CD14-positive monocyte (primary cell): ENCODE measurements at regions of chr11 and their contacts with region 1.

Region 1: DNA sequence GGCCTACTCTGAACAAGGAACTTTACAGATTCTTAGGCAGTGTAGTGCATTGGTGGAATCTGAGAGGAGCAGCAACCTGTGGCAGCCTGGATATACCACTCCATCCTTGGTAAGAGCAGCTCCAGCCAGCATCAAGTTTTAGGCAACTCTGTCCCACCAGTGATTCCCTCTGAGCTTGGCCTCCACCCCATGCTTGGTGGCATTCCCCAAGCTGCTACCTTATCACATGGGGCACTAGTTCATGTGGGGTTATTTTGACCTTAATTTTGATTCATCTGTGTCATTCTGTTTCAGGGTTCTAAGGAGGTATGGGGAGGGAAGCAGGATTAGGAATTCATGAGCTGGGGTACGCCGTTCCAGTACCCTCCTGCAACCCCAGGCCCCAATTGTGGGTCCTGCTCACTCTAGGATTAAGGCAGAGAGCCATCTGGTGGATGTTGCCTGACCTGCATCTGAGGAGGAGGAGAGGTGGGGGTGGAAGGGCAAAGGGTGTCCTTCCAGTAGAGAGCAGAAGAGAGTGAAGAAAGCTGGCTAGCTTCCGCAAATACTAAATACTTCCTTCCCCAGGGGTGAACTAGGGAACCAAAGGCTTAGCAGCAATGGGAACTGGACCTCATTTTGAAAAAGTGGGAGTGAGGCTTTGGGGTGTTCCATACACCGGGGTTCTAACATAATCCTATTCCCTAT is 10.5 kb downstream of the LRRC51 start:
- DNase-seq: peak; percentile 86 to 92 (median 91)
- H3K4me3 ChIP-seq: peak overlapping the region in 1 of 3 experiments; percentile 10
- H3K4me3 Mint-ChIP-seq: peak overlapping the region in 1 of 2 donors; percentile 37
- H3K27ac ChIP-seq: peak overlapping the region; percentile 42 to 70
- H3K27ac Mint-ChIP-seq: peak overlapping the region; percentile 68 to 96 (median 87)
- H3K4me1 ChIP-seq: peaks cover 23% of the 10 kb centered on the region in 2 donors
- H3K4me1 Mint-ChIP-seq: peaks cover 31% of the 10 kb centered on the region
- H3K27me3 ChIP-seq: no peaks in the 10 kb centered on the region
- H3K27me3 Mint-ChIP-seq: peaks cover 0 to 2% (median 0%) of the 10 kb centered on the region in 3 donors
- CTCF ChIP-seq: peak; percentile 96

Region 2: DNA sequence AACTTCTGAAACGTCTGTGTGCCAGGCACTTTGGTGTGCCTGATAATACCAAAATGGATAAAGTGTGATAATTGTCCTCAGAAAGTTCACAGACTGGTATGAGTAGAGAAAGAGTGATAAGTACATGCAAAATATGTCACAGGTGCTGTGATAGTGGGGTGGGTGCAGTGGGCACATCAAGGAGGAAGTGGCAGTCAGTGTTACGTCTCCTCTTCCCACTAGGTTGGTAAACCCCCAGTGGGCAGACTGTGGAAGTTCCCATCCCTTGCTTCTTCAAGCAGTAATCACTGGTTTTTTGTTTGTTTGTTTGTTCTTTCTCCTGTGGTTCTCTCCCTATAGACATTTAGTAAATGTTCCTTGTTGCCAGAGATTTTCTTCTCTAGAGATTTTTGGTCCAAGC is 156.9 kb before region 1 on chr11:
- intact Hi-C with region 1: no loop called
- DNase-seq: peak in 1 of 3 donors; percentile 60
- H3K4me3 ChIP-seq: no peak overlapping the region
- H3K4me3 Mint-ChIP-seq: no peak overlapping the region
- H3K27ac ChIP-seq: no peak overlapping the region
- H3K27ac Mint-ChIP-seq: peak overlapping the region in 2 of 7 donors; percentile 18 to 21
- H3K4me1 ChIP-seq: peaks cover 10 to 13% of the 10 kb centered on the region in 2 donors
- H3K4me1 Mint-ChIP-seq: peaks cover 22% of the 10 kb centered on the region
- H3K27me3 ChIP-seq: no peaks in the 10 kb centered on the region
- H3K27me3 Mint-ChIP-seq: no peaks in the 10 kb centered on the region
- CTCF ChIP-seq: no peak

Region 3: GRCh38 chr11:71977743-71978418 is 113.3 kb before region 1 on chr11:
- intact Hi-C with region 1: loop called in 1 of 2 experiments (anchors 5 kb)
- DNase-seq: peak; percentile 62 to 75 (median 68)
- H3K4me3 ChIP-seq: no peak overlapping the region
- H3K4me3 Mint-ChIP-seq: no peak overlapping the region
- H3K27ac ChIP-seq: peak overlapping the region; percentile 49 to 52
- H3K27ac Mint-ChIP-seq: peak overlapping the region; percentile 70 to 93 (median 81)
- H3K4me1 ChIP-seq: peaks cover 7 to 11% of the 10 kb centered on the region in 2 donors
- H3K4me1 Mint-ChIP-seq: peaks cover 8% of the 10 kb centered on the region
- H3K27me3 ChIP-seq: no peaks in the 10 kb centered on the region
- H3K27me3 Mint-ChIP-seq: peaks cover 0 to 3% (median 0%) of the 10 kb centered on the region in 3 donors
- CTCF ChIP-seq: peak; percentile 75

Region 4: DNA sequence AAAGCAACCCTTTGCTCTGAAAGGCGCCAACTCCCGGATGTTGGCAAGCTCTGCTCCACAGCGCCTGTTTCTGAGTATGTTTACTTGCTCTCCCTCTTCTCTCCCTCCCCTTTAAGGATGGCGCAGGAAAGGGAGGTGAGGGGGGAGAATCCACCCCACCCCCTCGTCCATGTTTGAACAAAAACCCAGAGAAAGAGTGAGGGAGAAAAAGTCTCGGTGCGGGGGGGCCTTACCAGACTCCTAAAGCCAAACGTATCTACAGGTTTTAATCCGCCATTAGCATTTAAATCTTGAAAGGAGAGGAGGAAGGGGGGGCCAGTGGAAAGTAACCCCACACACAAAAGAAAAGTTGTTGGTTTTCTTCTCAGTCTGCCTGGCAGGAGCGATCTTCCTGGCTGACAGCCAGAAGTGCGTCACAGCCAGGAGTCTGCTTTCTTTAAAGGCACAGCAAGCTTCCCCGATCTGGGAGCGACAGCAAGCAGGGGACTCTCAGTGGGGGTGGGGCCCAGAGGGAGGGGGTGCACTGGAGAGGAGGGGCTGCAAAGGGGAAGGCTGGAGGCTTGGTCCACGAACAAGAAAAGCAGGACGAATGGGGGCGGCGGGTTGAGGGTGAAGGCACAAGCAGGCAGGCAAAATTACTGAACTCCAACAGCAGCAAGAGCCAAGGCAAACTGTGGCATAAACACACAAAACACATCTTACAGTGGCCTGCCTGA is 50.3 kb before region 1 on chr11:
- intact Hi-C with region 1: loop called in 1 of 2 experiments (anchors 5 kb)
- DNase-seq: peak; percentile 64 to 80 (median 73)
- H3K4me3 ChIP-seq: peak overlapping the region; percentile 68 to 94 (median 89)
- H3K4me3 Mint-ChIP-seq: no peak overlapping the region
- H3K27ac ChIP-seq: peak overlapping the region; percentile 82 to 95
- H3K27ac Mint-ChIP-seq: no peak overlapping the region
- H3K4me1 ChIP-seq: peaks cover 33 to 42% of the 10 kb centered on the region in 2 donors
- H3K4me1 Mint-ChIP-seq: peaks cover 6% of the 10 kb centered on the region
- H3K27me3 ChIP-seq: no peaks in the 10 kb centered on the region
- H3K27me3 Mint-ChIP-seq: no peaks in the 10 kb centered on the region
- CTCF ChIP-seq: no peak

Region 5: DNA sequence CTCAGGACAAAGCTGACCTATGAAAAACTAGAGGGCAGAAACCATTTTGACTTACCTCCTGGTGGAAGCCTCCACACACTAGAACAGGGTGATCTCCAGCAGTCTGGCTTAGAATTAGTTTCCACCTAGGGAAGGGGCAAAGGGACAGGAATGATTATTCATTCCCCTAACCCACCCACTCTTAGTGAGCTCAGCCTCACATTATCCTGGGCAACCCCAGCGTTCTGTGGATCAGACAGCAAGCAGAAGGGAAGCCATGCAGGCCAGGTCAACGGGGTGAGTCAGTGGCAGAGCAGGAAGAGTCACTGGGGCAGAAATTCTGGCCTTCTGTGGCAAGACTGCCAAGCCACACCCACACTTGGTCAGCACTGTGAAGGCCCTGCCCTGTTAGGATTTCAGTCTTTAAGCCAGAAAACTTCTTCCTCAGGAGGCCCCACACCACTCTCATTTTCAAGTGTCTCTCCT is 21.3 kb before region 1 on chr11:
- intact Hi-C with region 1: loop called in 1 of 2 experiments (anchors 2 kb)
- DNase-seq: peak; percentile 92 to 97 (median 96)
- H3K4me3 ChIP-seq: peak overlapping the region; percentile 0 to 61 (median 40)
- H3K4me3 Mint-ChIP-seq: peak overlapping the region; percentile 56 to 92
- H3K27ac ChIP-seq: peak overlapping the region; percentile 88 to 96
- H3K27ac Mint-ChIP-seq: peak overlapping the region; percentile 97 to 99 (median 99)
- H3K4me1 ChIP-seq: peaks cover 50 to 64% of the 10 kb centered on the region in 2 donors
- H3K4me1 Mint-ChIP-seq: peaks cover 60% of the 10 kb centered on the region
- H3K27me3 ChIP-seq: no peaks in the 10 kb centered on the region
- H3K27me3 Mint-ChIP-seq: no peaks in the 10 kb centered on the region
- CTCF ChIP-seq: no peak

Region 6: GRCh38 chr11:72080256-72080974 is 10.7 kb before region 1 on chr11 and contains the starts of genes LRRC51 and NUMA1:
- intact Hi-C with region 1: no loop called
- DNase-seq: peak; percentile 100
- H3K4me3 ChIP-seq: peak within 1 kb of the TSS; percentile 69 to 98 (median 72)
- H3K4me3 Mint-ChIP-seq: peak within 1 kb of the TSS; percentile 84 to 98
- H3K27ac ChIP-seq: peak within 1 kb of the TSS; percentile 53 to 82
- H3K27ac Mint-ChIP-seq: peak within 1 kb of the TSS; percentile 96 to 100 (median 98)
- H3K4me1 ChIP-seq: peaks cover 36 to 66% of the 10 kb centered on the region in 2 donors
- H3K4me1 Mint-ChIP-seq: peaks cover 48% of the 10 kb centered on the region
- H3K27me3 ChIP-seq: no peaks in the 10 kb centered on the region
- H3K27me3 Mint-ChIP-seq: no peaks in the 10 kb centered on the region
- CTCF ChIP-seq: no peak
- polyA plus RNA-seq, gene LRRC51: 1.3 to 1.9 (median 1.6) TPM
- polyA plus RNA-seq, gene NUMA1: 4.1 to 91.2 (median 12.4) TPM